ENCODE measurements at regions of chr12 and their contacts with region 1.

Region 1: GRCh38 chr12:42180990-42181596 is 36.4 kb upstream of the GXYLT1 start:
- DNase-seq: no peak
- H3K4me3 ChIP-seq: no peak overlapping the region
- H3K27ac ChIP-seq: no peak overlapping the region
- H3K4me1 ChIP-seq: no peaks in the 10 kb centered on the region
- H3K27me3 ChIP-seq: no peaks in the 10 kb centered on the region
- CTCF ChIP-seq: no peak
- EP300 ChIP-seq: no peak
- POLR2A ChIP-seq: no peak

Region 2: DNA sequence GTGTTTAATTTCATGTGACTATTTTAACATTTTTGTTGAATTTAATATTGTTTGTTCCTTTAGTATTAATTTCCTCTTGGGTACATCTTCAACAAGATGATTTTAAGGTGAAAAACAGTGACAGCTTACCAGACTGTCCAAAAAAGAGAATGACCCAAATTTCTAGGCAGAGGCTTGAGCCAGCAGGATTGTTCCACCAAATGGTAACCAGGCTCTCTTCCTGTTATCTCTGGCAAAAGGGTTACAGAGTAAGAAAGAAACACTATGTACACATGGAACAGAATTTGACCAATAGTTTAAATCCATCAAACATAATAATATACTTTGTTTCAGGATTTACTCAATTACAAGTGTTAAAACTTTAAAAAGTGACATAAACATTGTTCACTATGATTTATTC is 17.9 kb after region 1 on chr12:
- in situ Hi-C with region 1: no loop called
- intact Hi-C with region 1: loop called (anchors 1 kb)
- DNase-seq: no peak
- H3K4me3 ChIP-seq: no peak overlapping the region
- H3K27ac ChIP-seq: no peak overlapping the region
- H3K4me1 ChIP-seq: no peaks in the 10 kb centered on the region
- H3K27me3 ChIP-seq: no peaks in the 10 kb centered on the region
- CTCF ChIP-seq: no peak
- EP300 ChIP-seq: no peak
- POLR2A ChIP-seq: no peak